IMR-90 (cell line): ENCODE measurements at regions of chr1 and their contacts with region 1.

Region 1: DNA sequence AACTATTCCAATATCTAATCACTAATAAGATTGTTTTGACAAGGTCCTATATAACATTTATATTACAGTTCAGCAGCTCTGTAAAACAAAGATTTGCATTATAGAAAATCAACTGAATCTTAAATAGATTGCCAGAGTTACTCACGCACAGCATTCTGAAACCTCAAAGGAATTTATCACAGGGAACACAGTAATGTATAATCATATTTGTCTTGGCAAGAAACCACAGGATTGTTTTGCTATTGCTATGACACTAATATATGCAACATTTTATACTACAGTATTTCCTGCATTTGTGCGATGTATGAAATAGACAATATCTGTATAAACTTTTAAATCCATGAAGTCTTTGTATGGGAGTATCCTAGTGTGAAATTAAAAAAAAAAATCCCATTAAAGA is 101.4 kb downstream of the PLPPR5 start:
- DNase-seq: peak; percentile 88
- ATAC-seq: peak; percentile 89
- H3K4me3 ChIP-seq: no peak overlapping the region
- H3K27ac ChIP-seq: no peak overlapping the region
- H3K4me1 ChIP-seq: no peaks in the 10 kb centered on the region
- H3K27me3 ChIP-seq: no peaks in the 10 kb centered on the region; the same call in 1 of the 2 replicates
- CTCF ChIP-seq: no peak
- POLR2A ChIP-seq: no peak
- RAD21 ChIP-seq: no peak

Region 2: GRCh38 chr1:98769162-98769561 is 134.1 kb before region 1 on chr1:
- CTCF ChIA-PET with region 1: no interaction called
- POLR2A ChIA-PET with region 1: no interaction called
- dilution Hi-C with region 1: no loop called
- in situ Hi-C with region 1: no loop called
- intact Hi-C with region 1: no loop called
- DNase-seq: no peak
- ATAC-seq: no peak
- H3K4me3 ChIP-seq: no peak overlapping the region
- H3K27ac ChIP-seq: no peak overlapping the region
- H3K4me1 ChIP-seq: no peaks in the 10 kb centered on the region
- H3K27me3 ChIP-seq: no peaks in the 10 kb centered on the region
- CTCF ChIP-seq: no peak
- POLR2A ChIP-seq: no peak
- RAD21 ChIP-seq: no peak

Region 3: DNA sequence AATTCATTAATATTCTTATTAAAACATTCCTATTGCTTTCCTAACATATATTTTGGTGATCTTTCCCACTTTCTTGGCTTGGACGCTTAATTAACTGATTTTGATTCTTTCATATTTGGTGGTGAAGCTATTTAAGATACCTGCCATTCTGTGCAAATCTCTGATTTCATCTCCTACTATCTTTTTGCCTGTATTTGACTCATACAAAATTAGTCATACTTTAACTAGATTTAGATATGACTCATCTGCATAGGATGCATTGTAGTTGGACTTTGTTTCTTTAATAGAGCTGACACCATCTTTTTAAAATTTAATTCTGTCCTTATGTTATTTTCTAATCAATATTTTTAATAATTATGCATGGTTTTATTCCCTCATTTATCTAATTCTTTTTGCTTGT is 267.3 kb after region 1 on chr1:
- CTCF ChIA-PET with region 1: no interaction called
- POLR2A ChIA-PET with region 1: no interaction called
- dilution Hi-C with region 1: no loop called
- in situ Hi-C with region 1: no loop called
- intact Hi-C with region 1: no loop called
- DNase-seq: peak; percentile 66
- ATAC-seq: peak; percentile 75
- H3K4me3 ChIP-seq: no peak overlapping the region
- H3K27ac ChIP-seq: no peak overlapping the region
- H3K4me1 ChIP-seq: no peaks in the 10 kb centered on the region
- H3K27me3 ChIP-seq: no peaks in the 10 kb centered on the region
- CTCF ChIP-seq: no peak
- POLR2A ChIP-seq: no peak
- RAD21 ChIP-seq: no peak

Region 4: GRCh38 chr1:99472893-99473292 is 569.6 kb after region 1 on chr1:
- CTCF ChIA-PET with region 1: no interaction called
- POLR2A ChIA-PET with region 1: no interaction called
- dilution Hi-C with region 1: no loop called
- in situ Hi-C with region 1: loop called (anchors 25 kb)
- intact Hi-C with region 1: loop called (anchors 10 kb)
- DNase-seq: peak; percentile 19
- ATAC-seq: no peak
- H3K4me3 ChIP-seq: no peak overlapping the region
- H3K27ac ChIP-seq: no peak overlapping the region
- H3K4me1 ChIP-seq: no peaks in the 10 kb centered on the region
- H3K27me3 ChIP-seq: no peaks in the 10 kb centered on the region
- CTCF ChIP-seq: no peak
- POLR2A ChIP-seq: no peak
- RAD21 ChIP-seq: no peak

Region 5: GRCh38 chr1:99481391-99481996 is 578.2 kb after region 1 on chr1:
- CTCF ChIA-PET with region 1: no interaction called
- POLR2A ChIA-PET with region 1: no interaction called
- dilution Hi-C with region 1: no loop called
- in situ Hi-C with region 1: loop called (anchors 25 kb)
- intact Hi-C with region 1: loop called (anchors 10 kb)
- DNase-seq: peak; percentile 68
- ATAC-seq: peak; percentile 71; the same call in 1 of the 2 replicates
- H3K4me3 ChIP-seq: no peak overlapping the region
- H3K27ac ChIP-seq: no peak overlapping the region
- H3K4me1 ChIP-seq: no peaks in the 10 kb centered on the region
- H3K27me3 ChIP-seq: no peaks in the 10 kb centered on the region
- CTCF ChIP-seq: peak; percentile 83
- POLR2A ChIP-seq: no peak
- RAD21 ChIP-seq: peak; percentile 88